Cardiac septum (tissue), 1 donor: ENCODE measurements at regions of chr6 and their contacts with region 1.

Region 1: GRCh38 chr6:156787569-156788492 is 10.7 kb downstream of the ARID1B start:
- DNase-seq: no peak

Region 2: GRCh38 chr6:156809034-156809433 is 21.2 kb after region 1 on chr6:
- intact Hi-C with region 1: no loop called
- DNase-seq: no peak

Region 3: DNA sequence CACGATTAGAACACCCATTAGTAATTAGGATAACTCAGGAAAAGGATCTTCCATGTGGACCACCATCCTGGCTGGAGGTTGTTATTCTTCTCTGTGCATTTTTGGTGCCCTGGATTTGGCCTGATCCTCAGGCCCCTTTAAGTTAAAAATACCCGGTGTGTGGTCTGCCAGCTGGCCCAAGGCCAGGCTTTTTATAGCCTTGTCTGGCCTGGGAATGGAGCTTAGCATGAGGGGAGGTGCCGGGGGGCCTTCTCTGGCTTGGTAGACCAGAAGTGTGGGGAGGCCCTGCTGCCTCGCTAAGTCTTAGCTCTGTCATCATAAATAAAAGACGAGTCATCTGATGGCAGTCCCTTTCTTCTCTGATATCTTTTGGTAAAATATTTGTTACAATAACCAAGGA is 60.7 kb after region 1 on chr6:
- intact Hi-C with region 1: loop called (anchors 5 kb)
- DNase-seq: peak; percentile 90

Region 4: GRCh38 chr6:156866220-156867015 is 78.6 kb after region 1 on chr6:
- intact Hi-C with region 1: loop called (anchors 5 kb)
- DNase-seq: no peak